ENCODE measurements at regions of chr15 and their contacts with region 1.

Region 1: DNA sequence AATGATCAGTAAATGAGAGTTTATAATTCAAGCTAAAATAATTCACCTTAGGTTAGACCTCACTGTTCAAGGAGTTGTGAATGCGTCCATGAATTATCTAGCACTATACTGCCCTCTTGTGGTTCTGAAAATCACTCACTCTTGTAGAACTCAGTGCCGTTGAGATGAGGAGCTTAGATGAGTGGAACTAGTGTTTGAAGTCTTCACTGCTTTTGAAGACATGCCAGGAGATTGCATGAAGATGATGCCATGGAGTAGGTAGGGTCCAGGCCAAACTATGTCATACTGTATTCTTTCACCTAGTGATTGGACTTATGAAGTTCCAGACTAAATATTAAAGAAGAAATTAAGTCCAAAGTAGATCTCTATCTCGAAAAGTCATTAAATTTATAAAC is 28.8 kb downstream of the LYSMD4 start:
- DNase-seq: no peak
- H3K4me3 Mint-ChIP-seq: no peak overlapping the region
- H3K27ac Mint-ChIP-seq: no peak overlapping the region
- H3K4me1 Mint-ChIP-seq: peaks cover 40% of the 10 kb centered on the region
- H3K27me3 Mint-ChIP-seq: no peaks in the 10 kb centered on the region

Region 2: DNA sequence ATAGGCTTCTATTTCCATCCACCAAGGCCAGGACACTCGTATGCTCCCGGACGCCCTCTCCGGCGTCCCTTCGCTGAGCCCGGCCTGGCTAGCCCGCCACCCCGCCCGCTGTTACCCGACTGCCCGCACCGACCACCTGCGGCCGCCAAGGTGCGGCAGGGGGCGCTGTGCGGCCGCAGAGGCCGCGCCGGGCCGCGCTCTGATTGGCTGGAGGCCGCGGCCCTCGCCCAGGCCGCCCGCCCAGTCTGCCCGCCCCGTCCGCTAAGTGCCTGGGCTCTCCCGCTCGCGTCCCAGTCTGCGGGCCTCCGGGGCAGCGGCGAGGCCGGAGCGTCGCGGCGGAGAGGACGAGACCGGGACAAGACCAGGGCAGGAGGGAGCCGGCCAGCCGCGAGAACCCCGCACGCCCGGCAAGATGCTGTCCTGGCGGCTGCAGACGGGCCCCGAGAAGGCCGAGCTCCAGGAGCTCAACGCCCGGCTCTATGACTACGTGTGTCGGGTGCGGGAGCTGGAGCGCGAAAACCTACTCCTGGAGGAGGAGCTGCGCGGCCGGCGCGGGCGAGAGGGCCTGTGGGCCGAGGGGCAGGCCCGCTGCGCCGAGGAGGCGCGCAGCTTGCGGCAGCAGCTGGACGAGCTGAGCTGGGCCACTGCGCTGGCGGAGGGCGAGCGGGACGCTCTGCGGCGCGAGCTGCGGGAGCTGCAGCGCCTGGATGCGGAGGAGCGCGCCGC is 599.5 kb before region 1 on chr15 and contains the start of gene SYNM:
- CTCF ChIA-PET with region 1: interaction called, 7 read pairs
- POLR2A ChIA-PET with region 1: no interaction called
- intact Hi-C with region 1: loop called (anchors 1 kb)
- DNase-seq: peak; percentile 60
- H3K4me3 Mint-ChIP-seq: peak within 1 kb of the TSS; percentile 62
- H3K27ac Mint-ChIP-seq: no peak within 1 kb of the TSS
- H3K4me1 Mint-ChIP-seq: peaks cover 10% of the 10 kb centered on the region
- H3K27me3 Mint-ChIP-seq: peaks cover 35% of the 10 kb centered on the region
- total RNA-seq, gene SYNM: 2.6 to 2.7 TPM

Region 3: DNA sequence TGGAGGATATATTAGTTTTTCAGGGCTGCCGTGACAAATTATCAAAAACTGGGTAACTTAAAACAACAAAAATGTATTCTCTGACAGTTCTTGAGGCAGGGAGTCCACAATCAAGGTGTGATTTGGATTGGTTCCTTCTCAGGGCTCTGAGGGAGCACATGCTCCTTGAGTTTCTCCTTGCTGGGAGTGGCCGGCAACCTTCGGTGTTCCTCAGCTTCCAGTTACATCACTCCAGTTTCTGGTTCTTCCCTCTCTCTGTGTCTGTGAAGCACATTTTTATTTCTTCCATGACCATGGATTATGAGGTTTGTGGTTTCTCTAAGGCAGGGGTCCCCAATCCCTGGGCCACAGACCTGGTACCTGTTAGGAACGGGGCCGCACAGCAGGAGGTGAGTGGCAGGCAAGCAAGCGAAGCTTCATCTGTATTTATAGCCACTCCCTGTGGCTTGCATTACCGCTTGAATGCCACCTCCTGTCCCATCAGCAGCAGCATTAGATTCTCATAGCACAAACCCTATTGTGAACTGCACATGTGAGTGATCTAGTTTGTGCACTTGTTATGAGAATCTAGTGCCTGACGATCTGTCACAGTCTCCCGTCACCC is 428.8 kb before region 1 on chr15:
- CTCF ChIA-PET with region 1: interaction called, 118 read pairs
- POLR2A ChIA-PET with region 1: interaction called, 4 read pairs
- intact Hi-C with region 1: loop called (anchors 1 kb)
- DNase-seq: no peak
- H3K4me3 Mint-ChIP-seq: no peak overlapping the region
- H3K27ac Mint-ChIP-seq: no peak overlapping the region
- H3K4me1 Mint-ChIP-seq: peaks cover 24% of the 10 kb centered on the region
- H3K27me3 Mint-ChIP-seq: no peaks in the 10 kb centered on the region

Region 4: GRCh38 chr15:99335508-99335907 is 368.9 kb before region 1 on chr15:
- CTCF ChIA-PET with region 1: interaction called, 14 read pairs
- POLR2A ChIA-PET with region 1: no interaction called
- intact Hi-C with region 1: loop called (anchors 5 kb)
- DNase-seq: no peak
- H3K4me3 Mint-ChIP-seq: no peak overlapping the region
- H3K27ac Mint-ChIP-seq: no peak overlapping the region
- H3K4me1 Mint-ChIP-seq: peaks cover 3% of the 10 kb centered on the region
- H3K27me3 Mint-ChIP-seq: no peaks in the 10 kb centered on the region

Region 5: DNA sequence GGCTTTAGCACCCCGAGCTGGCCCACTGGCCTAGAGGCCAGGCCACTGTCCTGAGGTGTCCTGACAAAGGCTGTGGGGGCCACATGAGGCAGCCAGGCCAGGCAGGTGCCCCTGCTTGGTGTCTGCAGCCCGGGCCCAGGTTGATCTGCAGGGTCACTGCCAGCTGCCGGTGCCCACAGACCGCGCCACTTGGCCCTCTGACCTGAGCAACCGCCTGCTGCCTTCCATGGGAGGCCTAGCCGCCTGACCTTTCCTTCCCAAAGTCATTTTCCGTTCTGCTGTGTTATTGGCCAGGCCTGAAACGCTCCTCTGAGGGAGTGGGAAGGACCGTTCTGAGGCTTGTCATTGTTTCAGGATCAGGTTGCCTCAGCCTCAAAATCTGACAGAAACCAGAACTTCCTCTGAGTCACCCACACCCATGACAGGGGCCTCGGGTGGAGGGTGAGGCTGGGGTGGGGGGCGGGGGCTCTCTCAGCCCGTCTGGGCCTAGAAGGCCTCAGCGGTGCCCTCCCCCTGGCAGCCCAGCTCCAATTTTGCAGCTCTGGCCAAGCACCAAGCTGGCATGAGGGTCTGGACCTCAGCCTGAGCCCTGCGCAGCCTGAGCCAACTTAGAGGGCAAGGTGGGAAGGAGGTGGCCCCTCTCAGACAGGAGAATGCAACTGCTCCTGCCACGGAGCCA is 279.3 kb before region 1 on chr15:
- CTCF ChIA-PET with region 1: interaction called, 4 read pairs
- POLR2A ChIA-PET with region 1: no interaction called
- intact Hi-C with region 1: loop called (anchors 2 kb)
- DNase-seq: peak; percentile 81
- H3K4me3 Mint-ChIP-seq: peak overlapping the region; percentile 4
- H3K27ac Mint-ChIP-seq: peak overlapping the region; percentile 70
- H3K4me1 Mint-ChIP-seq: peaks cover 54% of the 10 kb centered on the region
- H3K27me3 Mint-ChIP-seq: peaks cover 4% of the 10 kb centered on the region

Region 6: GRCh38 chr15:99526176-99526575 is 178.3 kb before region 1 on chr15:
- CTCF ChIA-PET with region 1: no interaction called
- POLR2A ChIA-PET with region 1: no interaction called
- intact Hi-C with region 1: no loop called
- DNase-seq: no peak
- H3K4me3 Mint-ChIP-seq: no peak overlapping the region
- H3K27ac Mint-ChIP-seq: no peak overlapping the region
- H3K4me1 Mint-ChIP-seq: no peaks in the 10 kb centered on the region
- H3K27me3 Mint-ChIP-seq: peaks cover under 1% of the 10 kb centered on the region

Region 7: GRCh38 chr15:99686290-99686689 is 18.2 kb before region 1 on chr15:
- CTCF ChIA-PET with region 1: interaction called, 11 read pairs
- POLR2A ChIA-PET with region 1: no interaction called
- intact Hi-C with region 1: no loop called
- DNase-seq: no peak
- H3K4me3 Mint-ChIP-seq: no peak overlapping the region
- H3K27ac Mint-ChIP-seq: no peak overlapping the region
- H3K4me1 Mint-ChIP-seq: peaks cover 18% of the 10 kb centered on the region
- H3K27me3 Mint-ChIP-seq: no peaks in the 10 kb centered on the region

Region 8: GRCh38 chr15:99755692-99756409 is 51.4 kb after region 1 on chr15:
- CTCF ChIA-PET with region 1: interaction called, 49 read pairs
- POLR2A ChIA-PET with region 1: no interaction called
- intact Hi-C with region 1: loop called (anchors 1 kb)
- DNase-seq: peak; percentile 35
- H3K4me3 Mint-ChIP-seq: no peak overlapping the region
- H3K27ac Mint-ChIP-seq: no peak overlapping the region
- H3K4me1 Mint-ChIP-seq: no peaks in the 10 kb centered on the region
- H3K27me3 Mint-ChIP-seq: peaks cover 2% of the 10 kb centered on the region

Region 9: DNA sequence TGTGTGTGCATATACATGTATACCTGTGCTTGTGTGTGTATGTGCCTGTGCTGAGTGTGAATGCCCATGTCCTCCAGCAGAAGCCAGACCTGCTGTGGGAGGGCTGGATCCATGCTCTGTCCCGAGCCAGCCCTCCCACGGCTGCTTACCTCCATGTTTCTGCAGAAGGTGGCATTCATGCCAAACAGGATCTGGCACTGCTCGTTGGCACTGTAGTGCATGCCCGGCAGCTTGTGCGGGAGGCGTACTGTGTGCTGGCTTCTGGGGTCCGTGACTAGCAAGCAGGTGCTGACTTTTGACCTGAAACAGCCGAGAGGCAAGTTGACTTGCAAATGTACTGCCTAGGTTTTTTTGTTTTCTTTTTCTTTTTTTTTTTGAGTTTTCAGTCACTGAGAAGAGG is 448.0 kb after region 1 on chr15:
- CTCF ChIA-PET with region 1: no interaction called
- POLR2A ChIA-PET with region 1: no interaction called
- intact Hi-C with region 1: no loop called
- DNase-seq: no peak
- H3K4me3 Mint-ChIP-seq: no peak overlapping the region
- H3K27ac Mint-ChIP-seq: no peak overlapping the region
- H3K4me1 Mint-ChIP-seq: no peaks in the 10 kb centered on the region
- H3K27me3 Mint-ChIP-seq: no peaks in the 10 kb centered on the region

Measured in activated CD4-positive, alpha-beta memory T cell treated with anti-CD3 and anti-CD28 coated beads for 36 hours (primary cell).